ENCODE measurements at regions of chr16 and their contacts with region 1.

Region 1: DNA sequence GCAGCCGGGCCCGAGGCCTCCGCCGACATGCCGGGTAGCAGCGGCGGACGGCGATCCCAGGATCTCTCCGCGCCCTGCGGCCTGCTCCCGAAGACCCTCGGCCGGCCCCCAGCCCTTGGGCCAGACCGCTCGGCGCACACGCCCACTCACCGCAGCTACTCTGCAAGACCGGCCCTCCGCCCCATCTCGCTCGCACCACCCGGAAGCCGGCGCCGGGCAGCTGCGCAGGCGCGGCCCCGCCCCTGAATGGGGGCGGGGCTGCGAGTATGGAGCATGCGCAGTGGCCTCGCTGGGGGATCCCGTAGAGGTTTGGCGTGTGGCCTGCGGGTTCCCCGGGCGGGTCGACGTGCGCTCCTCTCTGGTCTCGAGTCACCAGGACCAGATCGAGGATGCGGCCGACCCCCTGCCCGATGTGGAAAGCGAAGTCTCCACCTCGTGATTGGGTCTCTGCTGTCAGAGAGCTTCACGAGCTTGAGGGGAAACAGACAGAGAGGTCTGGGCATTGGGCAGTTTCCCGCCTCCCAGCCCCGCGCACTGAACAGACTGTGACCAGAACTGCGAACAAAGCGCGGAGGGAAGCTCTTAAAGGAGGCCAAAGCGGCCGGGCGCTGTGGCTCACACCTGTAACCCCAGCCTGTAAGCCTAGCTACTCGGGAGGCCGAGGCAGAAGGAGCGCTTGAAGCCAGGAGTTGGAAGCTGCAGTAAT is at the start of gene KCTD13:
- DNase-seq: peak; percentile 92
- H3K4me3 Mint-ChIP-seq: peak within 1 kb of the TSS; percentile 87
- H3K27ac Mint-ChIP-seq: peak within 1 kb of the TSS; percentile 87
- H3K4me1 Mint-ChIP-seq: peaks cover 36% of the 10 kb centered on the region
- H3K27me3 Mint-ChIP-seq: no peaks in the 10 kb centered on the region
- total RNA-seq, gene KCTD13: 34.5 to 36.0 TPM

Region 2: GRCh38 chr16:29877266-29877961 is 48.7 kb before region 1 on chr16:
- CTCF ChIA-PET with region 1: no interaction called
- POLR2A ChIA-PET with region 1: no interaction called
- DNase-seq: peak; percentile 66
- H3K4me3 Mint-ChIP-seq: peak overlapping the region; percentile 18
- H3K27ac Mint-ChIP-seq: no peak overlapping the region
- H3K4me1 Mint-ChIP-seq: peaks cover 16% of the 10 kb centered on the region
- H3K27me3 Mint-ChIP-seq: peaks cover 31% of the 10 kb centered on the region

Region 3: GRCh38 chr16:29891525-29892457 is 34.4 kb before region 1 on chr16:
- CTCF ChIA-PET with region 1: no interaction called
- POLR2A ChIA-PET with region 1: no interaction called
- DNase-seq: no peak
- H3K4me3 Mint-ChIP-seq: no peak overlapping the region
- H3K27ac Mint-ChIP-seq: no peak overlapping the region
- H3K4me1 Mint-ChIP-seq: no peaks in the 10 kb centered on the region
- H3K27me3 Mint-ChIP-seq: peaks cover 5% of the 10 kb centered on the region

Region 4: GRCh38 chr16:29915590-29916247 is 10.4 kb before region 1 on chr16:
- CTCF ChIA-PET with region 1: interaction called, 3 read pairs
- POLR2A ChIA-PET with region 1: interaction called, 16 read pairs
- DNase-seq: no peak
- H3K4me3 Mint-ChIP-seq: no peak overlapping the region
- H3K27ac Mint-ChIP-seq: no peak overlapping the region
- H3K4me1 Mint-ChIP-seq: peaks cover 5% of the 10 kb centered on the region
- H3K27me3 Mint-ChIP-seq: no peaks in the 10 kb centered on the region

Region 5: GRCh38 chr16:29961479-29962343 is 35.6 kb after region 1 on chr16 and contains the start of gene TMEM219:
- CTCF ChIA-PET with region 1: interaction called, 10 read pairs
- POLR2A ChIA-PET with region 1: interaction called, 30 read pairs
- DNase-seq: peak; percentile 94
- H3K4me3 Mint-ChIP-seq: peak within 1 kb of the TSS; percentile 87
- H3K27ac Mint-ChIP-seq: peak within 1 kb of the TSS; percentile 82
- H3K4me1 Mint-ChIP-seq: peaks cover 25% of the 10 kb centered on the region
- H3K27me3 Mint-ChIP-seq: no peaks in the 10 kb centered on the region
- total RNA-seq, gene TMEM219: 68.9 to 78.7 TPM

Measured in activated CD4-positive, alpha-beta memory T cell treated with anti-CD3 and anti-CD28 coated beads, Interleukin-2, amount 10 ng/mL, durations not matched to agents 7 days and 5 days (primary cell).